Activated CD8-positive, alpha-beta T cell treated with anti-CD3 and anti-CD28 coated beads, Interleukin-2, amount 10 ng/mL, durations not matched to agents 7 days and 5 days (primary cell): ENCODE measurements at regions of chr12 and their contacts with region 1.

Region 1: DNA sequence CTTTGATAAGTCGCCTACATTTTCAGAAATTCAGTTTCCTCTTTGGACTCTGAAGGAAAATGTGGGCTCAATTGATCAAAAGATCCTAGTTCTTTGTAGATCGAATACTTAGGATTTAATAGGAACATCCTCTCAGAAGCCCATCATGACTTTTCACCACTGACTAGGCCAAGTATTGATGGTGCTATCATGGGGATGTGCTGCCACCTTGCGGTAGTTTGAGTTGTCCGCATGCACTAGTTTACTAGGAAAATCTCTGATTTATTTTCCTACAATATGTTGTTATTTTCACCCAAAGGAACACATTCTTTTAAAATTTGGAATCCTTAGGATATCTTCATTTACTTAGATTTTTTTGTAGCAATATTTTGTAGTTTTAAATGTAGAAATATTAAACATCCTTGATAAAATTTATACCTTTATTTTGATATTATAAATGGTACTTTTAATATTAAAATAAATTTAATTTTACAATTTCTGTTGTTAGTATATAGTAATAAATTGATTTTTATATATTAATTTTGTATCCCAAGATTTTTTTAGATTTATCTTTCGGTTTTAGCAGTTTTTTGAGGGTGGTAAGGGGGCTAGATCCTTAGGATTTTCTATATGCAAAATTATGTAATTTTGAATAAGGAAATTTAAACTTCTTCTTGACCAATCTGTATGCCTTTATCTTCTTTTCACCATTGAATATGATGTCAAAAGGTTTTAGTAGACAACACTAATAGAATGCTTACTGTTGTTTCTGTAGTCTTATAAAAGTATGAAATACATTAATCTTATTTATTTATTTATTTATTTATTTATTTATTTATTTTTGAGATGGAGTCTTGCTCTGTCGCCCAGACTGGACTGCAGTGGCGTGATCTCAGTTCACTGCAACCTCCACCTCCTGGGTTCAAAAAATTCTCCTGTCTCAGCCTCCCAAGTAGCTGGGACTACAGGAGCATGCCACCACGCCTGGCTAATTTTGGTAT is 52.9 kb upstream of the OR9K2 start:
- DNase-seq: peak; percentile 87
- ATAC-seq: peak; percentile 65
- H3K4me3 Mint-ChIP-seq: no peak overlapping the region
- H3K27ac Mint-ChIP-seq: no peak overlapping the region
- H3K4me1 Mint-ChIP-seq: peaks cover 7% of the 10 kb centered on the region
- H3K27me3 Mint-ChIP-seq: peaks cover 29% of the 10 kb centered on the region

Region 2: DNA sequence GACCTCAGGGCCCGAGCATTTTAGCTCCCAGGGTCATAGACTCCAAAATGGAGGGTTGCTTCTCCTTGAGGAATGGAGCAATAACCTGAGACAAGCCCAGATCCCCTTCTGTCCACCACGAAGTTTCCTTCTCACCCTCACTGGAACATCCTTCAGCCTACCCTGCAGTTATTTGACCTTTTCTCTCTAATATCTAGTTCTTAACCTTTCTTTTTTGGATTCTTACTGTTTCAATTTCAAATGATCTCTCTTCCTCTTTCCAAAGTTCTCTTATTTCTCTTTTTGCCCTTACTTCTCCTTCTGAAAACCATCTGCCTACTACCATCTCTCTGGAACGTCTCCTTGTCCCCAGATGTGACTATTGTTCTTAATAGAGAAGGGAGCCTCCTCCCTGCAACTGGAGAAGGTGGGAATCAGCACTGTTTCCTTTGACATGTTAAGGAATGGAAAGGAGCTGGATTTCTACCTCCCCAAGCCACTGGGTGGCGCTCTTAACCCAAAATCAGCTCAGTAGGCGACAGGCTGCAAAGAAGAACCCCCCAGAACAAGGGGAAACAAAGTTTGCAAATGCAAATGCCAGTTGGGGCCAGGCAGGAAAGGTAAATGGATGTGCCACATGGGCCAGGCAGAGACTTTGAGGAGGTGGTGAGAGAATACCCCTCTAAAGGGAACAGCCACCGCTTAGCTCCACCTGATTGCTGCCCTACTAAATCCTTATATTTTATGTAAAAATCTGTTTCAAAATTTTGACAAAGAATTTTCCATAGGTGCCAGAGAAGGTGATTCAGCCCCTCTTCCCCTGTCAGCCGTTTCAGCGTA is 546.3 kb before region 1 on chr12:
- CTCF ChIA-PET with region 1: no interaction called
- POLR2A ChIA-PET with region 1: no interaction called
- DNase-seq: peak; percentile 46
- ATAC-seq: no peak
- H3K4me3 Mint-ChIP-seq: no peak overlapping the region
- H3K27ac Mint-ChIP-seq: no peak overlapping the region
- H3K4me1 Mint-ChIP-seq: no peaks in the 10 kb centered on the region
- H3K27me3 Mint-ChIP-seq: no peaks in the 10 kb centered on the region

Region 3: GRCh38 chr12:54734196-54734950 is 339.0 kb before region 1 on chr12:
- CTCF ChIA-PET with region 1: interaction called, 10 read pairs
- POLR2A ChIA-PET with region 1: no interaction called
- DNase-seq: no peak
- ATAC-seq: no peak
- H3K4me3 Mint-ChIP-seq: no peak overlapping the region
- H3K27ac Mint-ChIP-seq: no peak overlapping the region
- H3K4me1 Mint-ChIP-seq: peaks cover 29% of the 10 kb centered on the region
- H3K27me3 Mint-ChIP-seq: peaks cover 8% of the 10 kb centered on the region

Region 4: GRCh38 chr12:54840317-54840771 is 233.0 kb before region 1 on chr12:
- CTCF ChIA-PET with region 1: interaction called, 10 read pairs
- POLR2A ChIA-PET with region 1: no interaction called
- DNase-seq: no peak
- ATAC-seq: no peak
- H3K4me3 Mint-ChIP-seq: no peak overlapping the region
- H3K27ac Mint-ChIP-seq: no peak overlapping the region
- H3K4me1 Mint-ChIP-seq: no peaks in the 10 kb centered on the region
- H3K27me3 Mint-ChIP-seq: peaks cover 13% of the 10 kb centered on the region

Region 5: DNA sequence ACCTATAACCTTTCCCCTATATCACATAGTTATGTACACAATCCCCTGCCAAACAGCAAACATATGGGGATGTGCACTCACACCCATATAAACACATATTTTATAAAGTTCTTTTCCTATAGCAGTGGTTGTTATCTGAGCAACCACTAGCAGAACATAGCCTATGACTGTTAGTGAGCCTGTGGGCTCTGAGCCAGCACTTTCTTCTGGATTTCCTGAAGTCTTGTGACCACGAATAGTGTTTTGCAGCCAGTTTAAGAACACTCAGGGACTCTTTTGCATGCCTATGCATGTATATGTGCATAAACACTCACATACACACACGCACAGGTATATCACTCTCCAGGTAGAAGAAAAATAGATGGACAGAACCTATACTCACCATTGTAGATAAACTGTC is 105.9 kb before region 1 on chr12:
- CTCF ChIA-PET with region 1: interaction called, 71 read pairs
- POLR2A ChIA-PET with region 1: no interaction called
- DNase-seq: no peak
- ATAC-seq: peak; percentile 35
- H3K4me3 Mint-ChIP-seq: no peak overlapping the region
- H3K27ac Mint-ChIP-seq: peak overlapping the region; percentile 84
- H3K4me1 Mint-ChIP-seq: peaks cover 36% of the 10 kb centered on the region
- H3K27me3 Mint-ChIP-seq: no peaks in the 10 kb centered on the region

Region 6: DNA sequence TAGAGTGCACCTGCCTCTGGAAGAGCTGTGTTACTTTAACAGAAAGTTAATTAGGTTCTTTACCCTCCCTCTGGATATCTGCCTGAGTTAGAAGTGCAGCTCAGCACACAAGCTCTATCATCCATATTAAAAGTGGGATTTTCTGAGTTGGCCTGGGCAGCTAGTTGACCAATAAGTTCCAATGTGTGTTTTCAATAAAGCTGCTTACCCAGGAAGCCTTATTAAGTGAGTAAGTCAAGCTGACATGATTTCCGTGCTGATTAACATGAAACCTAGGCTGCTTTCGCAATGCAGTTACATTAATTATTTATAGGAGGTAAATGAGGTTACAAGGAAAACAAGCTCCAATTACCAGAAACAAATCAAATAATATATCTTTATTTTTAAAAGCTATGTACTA is 48.8 kb before region 1 on chr12:
- CTCF ChIA-PET with region 1: interaction called, 10 read pairs
- POLR2A ChIA-PET with region 1: no interaction called
- DNase-seq: no peak
- ATAC-seq: no peak
- H3K4me3 Mint-ChIP-seq: no peak overlapping the region
- H3K27ac Mint-ChIP-seq: no peak overlapping the region
- H3K4me1 Mint-ChIP-seq: no peaks in the 10 kb centered on the region
- H3K27me3 Mint-ChIP-seq: peaks cover 28% of the 10 kb centered on the region

Region 7: GRCh38 chr12:55060470-55060869 is 12.9 kb before region 1 on chr12:
- CTCF ChIA-PET with region 1: interaction called, 14 read pairs
- POLR2A ChIA-PET with region 1: no interaction called
- DNase-seq: no peak
- ATAC-seq: peak; percentile 30
- H3K4me3 Mint-ChIP-seq: no peak overlapping the region
- H3K27ac Mint-ChIP-seq: no peak overlapping the region
- H3K4me1 Mint-ChIP-seq: peaks cover 5% of the 10 kb centered on the region
- H3K27me3 Mint-ChIP-seq: peaks cover 3% of the 10 kb centered on the region

Region 8: GRCh38 chr12:55420307-55420962 is 347.1 kb after region 1 on chr12:
- CTCF ChIA-PET with region 1: no interaction called
- POLR2A ChIA-PET with region 1: no interaction called
- DNase-seq: no peak
- ATAC-seq: no peak
- H3K4me3 Mint-ChIP-seq: no peak overlapping the region
- H3K27ac Mint-ChIP-seq: no peak overlapping the region
- H3K4me1 Mint-ChIP-seq: no peaks in the 10 kb centered on the region
- H3K27me3 Mint-ChIP-seq: peaks cover 23% of the 10 kb centered on the region